MCF 10A (cell line): ENCODE measurements at regions of chrX and their contacts with region 1.

Region 1: GRCh38 chrX:63930140-63930539 is 145.1 kb upstream of the ARHGEF9 start:
- DNase-seq: peak; percentile 14
- H3K4me3 Mint-ChIP-seq: no peak overlapping the region
- H3K27ac Mint-ChIP-seq: no peak overlapping the region
- H3K4me1 Mint-ChIP-seq: peaks cover 6% of the 10 kb centered on the region
- H3K27me3 Mint-ChIP-seq: no peaks in the 10 kb centered on the region
- CTCF ChIP-seq: peak; percentile 42

Region 2: GRCh38 chrX:63918611-63919010 is 11.5 kb before region 1 on chrX:
- CTCF ChIA-PET with region 1: interaction called, 59 read pairs
- POLR2A ChIA-PET with region 1: no interaction called
- intact Hi-C with region 1: no loop called
- DNase-seq: peak; percentile 13
- H3K4me3 Mint-ChIP-seq: no peak overlapping the region
- H3K27ac Mint-ChIP-seq: peak overlapping the region; percentile 35
- H3K4me1 Mint-ChIP-seq: peaks cover 26% of the 10 kb centered on the region
- H3K27me3 Mint-ChIP-seq: no peaks in the 10 kb centered on the region
- CTCF ChIP-seq: no peak

Region 3: GRCh38 chrX:64093761-64094160 is 163.6 kb after region 1 on chrX:
- CTCF ChIA-PET with region 1: interaction called, 5 read pairs
- POLR2A ChIA-PET with region 1: no interaction called
- intact Hi-C with region 1: loop called (anchors 5 kb)
- DNase-seq: peak; percentile 4
- H3K4me3 Mint-ChIP-seq: no peak overlapping the region
- H3K27ac Mint-ChIP-seq: no peak overlapping the region
- H3K4me1 Mint-ChIP-seq: no peaks in the 10 kb centered on the region
- H3K27me3 Mint-ChIP-seq: no peaks in the 10 kb centered on the region
- CTCF ChIP-seq: peak; percentile 20

Region 4: DNA sequence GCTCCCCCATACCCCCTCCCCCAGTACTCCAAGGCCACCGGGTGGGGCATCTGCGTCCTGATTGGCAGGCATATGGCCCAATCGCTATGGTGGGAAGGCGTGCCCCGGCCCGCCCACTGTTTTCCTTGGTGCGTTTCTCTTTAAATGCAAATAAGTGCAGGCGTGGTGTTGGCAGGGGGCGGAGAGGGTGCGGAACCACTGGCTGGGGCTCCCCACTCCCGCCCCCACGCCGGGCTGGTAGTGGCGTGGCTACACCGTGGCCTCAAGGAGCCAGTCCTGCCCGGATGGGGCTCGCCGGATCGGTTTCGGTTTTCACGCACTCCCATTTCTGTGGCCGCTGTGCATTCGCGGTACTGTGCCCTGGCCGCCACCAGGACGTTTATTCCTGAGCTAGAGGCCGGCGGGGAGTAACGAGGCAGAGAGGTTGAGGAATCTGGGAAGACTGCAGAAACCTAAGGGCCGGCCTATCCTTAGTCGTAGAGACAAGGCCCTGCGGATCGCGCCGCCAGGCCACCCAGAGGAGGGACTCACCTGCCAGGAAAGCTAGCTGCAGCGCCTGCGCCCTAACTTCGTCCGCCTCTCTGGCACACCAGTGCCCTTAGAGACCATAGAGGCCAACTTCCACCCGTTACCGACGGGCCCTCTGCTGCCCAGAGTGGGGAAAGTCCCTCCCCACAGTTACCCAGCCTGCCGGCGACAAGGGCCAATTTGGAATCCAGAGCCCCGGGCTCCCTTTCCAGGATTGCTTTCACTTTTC is 275.8 kb after region 1 on chrX:
- CTCF ChIA-PET with region 1: no interaction called
- POLR2A ChIA-PET with region 1: interaction called, 3 read pairs
- intact Hi-C with region 1: loop called (anchors 10 kb)
- DNase-seq: peak; percentile 90
- H3K4me3 Mint-ChIP-seq: peak overlapping the region; percentile 73
- H3K27ac Mint-ChIP-seq: peak overlapping the region; percentile 84
- H3K4me1 Mint-ChIP-seq: no peaks in the 10 kb centered on the region
- H3K27me3 Mint-ChIP-seq: no peaks in the 10 kb centered on the region
- CTCF ChIP-seq: no peak

Region 5: DNA sequence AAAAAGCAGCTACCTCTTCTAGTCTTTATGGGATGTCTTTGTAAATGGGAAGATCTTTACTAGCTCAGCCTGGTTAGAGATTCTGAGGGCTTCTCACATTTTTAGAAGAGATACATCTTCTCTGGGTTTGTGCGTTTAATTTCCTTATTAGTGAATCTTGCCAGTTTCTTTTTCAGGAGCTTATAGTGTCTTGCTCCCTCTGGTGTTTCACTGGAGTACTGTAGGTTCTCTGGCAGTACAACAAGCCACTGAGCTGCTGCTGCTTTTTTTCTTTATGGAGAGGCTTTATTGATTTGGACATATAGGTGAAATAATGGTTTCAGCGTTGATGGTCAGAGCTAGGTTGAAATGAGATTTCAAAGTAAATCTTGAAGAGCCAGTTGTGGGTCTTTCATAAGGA is 1521.5 kb after region 1 on chrX:
- CTCF ChIA-PET with region 1: interaction called, 14 read pairs
- POLR2A ChIA-PET with region 1: no interaction called
- intact Hi-C with region 1: no loop called
- DNase-seq: peak; percentile 44
- H3K4me3 Mint-ChIP-seq: no peak overlapping the region
- H3K27ac Mint-ChIP-seq: no peak overlapping the region
- H3K4me1 Mint-ChIP-seq: no peaks in the 10 kb centered on the region
- H3K27me3 Mint-ChIP-seq: no peaks in the 10 kb centered on the region
- CTCF ChIP-seq: peak; percentile 36